ENCODE measurements at regions of chr2 and their contacts with region 1.

Region 1: GRCh38 chr2:144645083-144645778 is 125.3 kb upstream of the ZEB2 start:
- DNase-seq: no peak
- H3K4me3 Mint-ChIP-seq: no peak overlapping the region
- H3K27ac Mint-ChIP-seq: no peak overlapping the region
- H3K4me1 Mint-ChIP-seq: no peaks in the 10 kb centered on the region
- H3K27me3 Mint-ChIP-seq: peaks cover 39% of the 10 kb centered on the region

Region 2: GRCh38 chr2:144553379-144553778 is 91.9 kb before region 1 on chr2:
- intact Hi-C with region 1: loop called (anchors 10 kb)
- DNase-seq: no peak
- H3K4me3 Mint-ChIP-seq: no peak overlapping the region
- H3K27ac Mint-ChIP-seq: no peak overlapping the region
- H3K4me1 Mint-ChIP-seq: peaks cover 20% of the 10 kb centered on the region
- H3K27me3 Mint-ChIP-seq: peaks cover 16% of the 10 kb centered on the region

Region 3: DNA sequence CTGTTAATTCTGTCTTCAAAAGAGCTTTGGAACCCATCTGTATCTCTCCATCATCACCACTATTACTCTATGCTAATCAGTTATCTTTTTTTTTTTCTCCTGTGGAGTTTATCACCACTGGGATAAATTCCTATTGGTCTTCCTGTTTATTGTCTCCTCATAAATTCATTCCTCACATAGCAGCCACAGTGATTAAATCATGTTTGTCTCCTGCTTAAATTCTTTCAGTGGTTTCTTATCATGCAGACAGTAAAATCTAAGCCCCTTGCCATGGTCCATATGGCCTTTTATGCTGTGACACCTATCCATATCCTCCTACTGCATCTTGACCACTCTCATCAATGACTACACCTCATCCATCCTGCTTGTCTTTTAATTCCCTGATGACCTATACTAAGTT is 114.5 kb after region 1 on chr2:
- intact Hi-C with region 1: no loop called
- DNase-seq: no peak
- H3K4me3 Mint-ChIP-seq: no peak overlapping the region
- H3K27ac Mint-ChIP-seq: no peak overlapping the region
- H3K4me1 Mint-ChIP-seq: no peaks in the 10 kb centered on the region
- H3K27me3 Mint-ChIP-seq: peaks cover 2% of the 10 kb centered on the region

Measured in activated T-helper 2 cell treated with anti-CD3 and anti-CD28 coated beads, Interferon-gamma antibody, Interleukin-2, Interleukin-4, amounts not matched to agents 10 μg/mL and 5 μg/mL and 100 μg/mL, durations not matched to agents 14 hours and 24 hours and 36 hours (primary cell).